G401 (cell line): ENCODE measurements at regions of chr14 and their contacts with region 1.

Region 1: DNA sequence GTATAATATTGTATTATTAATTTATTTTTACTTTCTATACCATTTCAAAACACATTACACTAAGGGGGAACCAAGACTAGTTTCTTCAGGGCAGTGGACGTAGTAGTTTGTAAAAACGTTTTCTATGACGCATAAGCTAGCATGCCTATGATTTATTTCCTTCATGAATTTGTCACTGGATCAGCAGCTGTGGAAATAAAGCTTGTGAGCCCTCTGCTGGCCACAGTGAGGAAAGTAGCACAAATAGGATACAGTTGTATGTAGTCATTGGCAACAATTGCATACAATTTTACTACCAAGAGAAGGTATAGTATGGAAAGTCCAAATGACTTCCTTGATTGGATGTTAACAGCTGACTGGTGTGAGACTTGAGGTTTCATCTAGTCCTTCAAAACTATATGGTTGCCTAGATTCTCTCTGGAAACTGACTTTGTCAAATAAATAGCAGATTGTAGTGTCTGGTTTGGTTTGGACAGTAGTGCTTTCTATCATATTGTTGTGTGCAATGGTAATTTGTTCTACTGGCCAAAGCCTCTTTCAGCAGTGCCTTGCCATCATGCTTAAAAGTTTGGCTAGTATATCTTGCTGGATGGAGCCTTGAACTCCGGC is 24.3 kb upstream of the PLEKHD1 start:
- DNase-seq: peak; percentile 86

Region 2: GRCh38 chr14:69191340-69192111 is 268.7 kb before region 1 on chr14 and contains the start of gene EXD2:
- in situ Hi-C with region 1: no loop called
- DNase-seq: peak; percentile 96
- total RNA-seq, gene EXD2: 10.3 and 20.4 TPM in 2 replicates

Region 3: DNA sequence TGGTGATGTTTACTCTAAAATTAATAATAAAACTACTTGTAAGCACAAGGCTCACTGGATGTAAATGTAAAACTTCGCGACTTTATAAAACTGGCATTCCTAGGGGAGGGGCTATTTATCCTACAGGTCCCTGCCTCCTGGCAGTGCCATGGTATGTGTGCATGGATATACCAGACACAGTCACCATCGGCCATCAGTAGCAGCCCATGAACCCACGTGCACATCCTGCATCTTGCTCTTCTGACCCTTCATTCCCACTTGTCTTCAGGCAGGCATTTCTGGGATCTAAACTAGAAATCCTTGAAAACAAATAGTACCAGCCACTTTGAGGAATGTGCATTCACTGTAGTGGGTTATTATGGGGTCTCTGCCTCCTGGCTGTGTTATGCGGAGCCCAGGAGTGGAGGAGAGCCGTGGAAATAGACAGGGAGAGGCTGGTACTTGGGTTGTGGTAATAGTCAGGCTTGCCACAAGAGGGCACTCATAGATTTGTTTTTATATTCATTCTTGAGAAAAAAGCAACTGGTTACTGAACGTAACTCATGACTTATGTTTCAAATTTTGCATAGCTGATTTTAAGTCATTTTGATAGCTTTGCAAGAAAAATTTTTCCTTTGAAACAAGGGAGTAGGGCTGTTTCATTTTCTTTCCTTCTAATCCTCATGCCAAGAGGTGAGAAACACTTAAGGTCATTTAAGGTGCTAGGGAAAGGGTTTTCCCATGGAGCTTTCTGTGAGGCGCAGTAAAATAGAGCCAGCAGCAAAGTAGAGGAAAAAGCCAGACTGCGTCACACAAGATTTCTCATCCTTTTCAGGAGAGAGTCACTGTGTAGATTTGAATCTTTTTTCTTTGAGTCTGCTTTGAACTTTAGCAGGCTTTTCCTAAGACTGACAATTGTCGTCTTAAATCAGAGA is 217.6 kb before region 1 on chr14:
- in situ Hi-C with region 1: loop called (anchors 25 kb)
- DNase-seq: peak; percentile 83

Region 4: DNA sequence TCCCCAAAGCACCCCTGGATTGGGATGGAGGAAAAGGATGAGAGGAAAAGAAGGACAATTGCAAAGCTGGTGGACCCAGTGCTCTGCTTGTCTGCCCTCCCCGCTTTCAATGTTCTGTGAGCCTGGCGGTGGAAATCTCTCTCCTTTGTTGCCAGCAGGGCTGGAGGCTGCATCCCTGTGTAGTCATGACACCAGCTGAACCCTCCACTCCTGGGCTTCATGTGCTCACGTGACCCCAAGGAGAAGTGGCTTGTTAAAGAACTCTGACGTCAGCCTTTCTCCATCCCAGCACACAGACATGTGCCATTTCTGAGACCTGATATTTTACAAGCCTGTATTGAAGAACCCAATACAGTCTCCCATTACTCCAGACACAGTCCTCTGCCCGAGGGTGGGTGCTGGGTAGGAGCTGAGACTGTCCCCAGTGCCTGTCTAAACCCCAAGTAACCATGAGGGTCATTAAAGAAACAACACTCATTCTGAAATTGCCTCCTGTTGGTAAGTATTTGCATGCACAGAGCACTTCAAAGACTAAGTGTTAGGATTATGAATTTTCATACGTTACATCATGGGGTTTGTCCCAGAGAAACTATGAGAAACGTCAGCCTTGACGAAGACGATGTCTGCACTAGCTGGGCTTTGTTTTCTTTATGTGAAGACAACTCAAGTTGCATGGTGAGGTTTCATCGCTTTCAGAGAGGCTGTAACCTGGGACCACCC is 178.6 kb before region 1 on chr14:
- in situ Hi-C with region 1: no loop called
- DNase-seq: no peak

Region 5: DNA sequence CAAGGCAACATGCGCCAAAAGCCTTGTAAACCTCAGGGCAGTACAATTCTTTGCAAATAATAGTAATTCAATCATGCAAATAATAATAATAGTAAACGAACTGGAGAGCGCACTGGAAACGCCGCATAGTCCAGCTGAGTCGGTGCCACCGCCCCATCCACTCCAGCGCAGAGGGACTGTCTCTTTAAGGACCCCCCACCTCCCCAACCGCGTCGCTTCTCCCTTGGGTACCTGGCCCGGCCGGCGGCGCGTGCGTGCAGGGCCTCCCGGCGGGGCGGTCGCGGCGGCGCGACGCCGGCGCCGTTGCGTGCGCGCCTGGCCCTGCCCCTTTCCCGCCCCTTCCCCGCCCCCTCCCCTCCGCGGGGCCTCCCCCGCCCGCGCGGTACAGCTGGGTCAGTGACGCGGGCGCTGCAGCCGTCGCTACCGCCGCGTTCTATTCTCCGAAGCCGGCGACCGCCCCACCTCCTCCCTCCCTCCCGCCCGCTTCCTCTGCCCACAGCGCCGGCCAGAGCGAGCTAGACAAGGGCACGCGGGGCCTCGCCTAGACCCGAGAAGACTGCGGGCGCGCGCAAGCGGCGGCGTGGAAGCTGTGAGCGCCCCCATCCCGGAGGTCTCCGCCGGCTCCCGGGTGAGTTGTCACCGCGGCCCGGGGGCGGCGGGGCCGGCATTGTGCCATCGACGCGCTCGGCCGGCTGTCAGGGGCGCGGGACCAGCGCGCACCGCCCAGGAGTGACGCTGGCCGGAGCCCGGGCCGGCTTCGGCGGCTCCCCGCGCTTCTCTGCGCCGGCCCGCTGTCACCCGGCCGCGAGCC is 151.2 kb after region 1 on chr14 and contains the start of gene SUSD6:
- in situ Hi-C with region 1: no loop called
- DNase-seq: peak; percentile 85
- total RNA-seq, gene SUSD6: 1.4 and 1.5 TPM in 2 replicates

Region 6: DNA sequence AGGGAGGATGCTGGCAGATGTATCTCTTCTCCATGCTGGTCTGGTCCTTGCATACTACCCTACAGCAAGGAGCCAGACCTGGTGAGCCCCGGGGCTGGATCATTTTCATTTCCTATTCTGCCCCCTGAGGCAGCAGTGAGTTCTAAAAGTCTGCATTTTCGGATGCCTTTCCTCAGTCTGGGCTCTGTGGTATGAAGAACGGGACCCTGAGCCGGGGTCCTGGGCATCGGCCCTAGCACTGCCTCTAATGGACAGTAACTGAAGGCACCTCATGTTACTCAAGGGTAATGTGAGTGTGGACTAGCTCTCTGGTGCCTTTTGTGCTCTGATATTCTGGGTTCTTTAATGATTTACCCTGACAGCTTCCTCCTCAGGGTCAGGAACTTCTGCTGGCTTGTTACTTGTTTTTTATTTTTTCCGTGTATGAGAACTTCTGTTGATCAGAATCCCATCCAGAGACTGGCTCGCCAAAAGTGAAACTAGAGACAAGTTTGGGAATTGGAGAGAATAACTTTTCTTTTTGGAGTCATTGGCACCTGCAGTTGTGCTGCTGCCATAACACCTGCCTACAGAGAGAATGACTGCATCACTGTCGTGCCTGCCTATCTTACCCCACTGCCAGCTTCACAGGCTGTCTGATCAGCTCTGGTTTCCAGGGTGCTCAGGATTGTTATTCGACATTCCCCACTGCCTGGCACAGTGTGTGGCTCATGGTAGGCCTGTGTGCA is 213.5 kb after region 1 on chr14:
- in situ Hi-C with region 1: no loop called
- DNase-seq: no peak